ENCODE measurements at regions of chr2 and their contacts with region 1.

Region 1: GRCh38 chr2:39436592-39437510 is at the start of gene MAP4K3:
- DNase-seq: peak; percentile 86
- H3K4me3 Mint-ChIP-seq: peak within 1 kb of the TSS; percentile 87
- H3K27ac Mint-ChIP-seq: peak within 1 kb of the TSS; percentile 83
- H3K4me1 Mint-ChIP-seq: peaks cover 66% of the 10 kb centered on the region
- H3K27me3 Mint-ChIP-seq: no peaks in the 10 kb centered on the region
- total RNA-seq, gene MAP4K3: 10.6 to 12.0 TPM

Region 2: DNA sequence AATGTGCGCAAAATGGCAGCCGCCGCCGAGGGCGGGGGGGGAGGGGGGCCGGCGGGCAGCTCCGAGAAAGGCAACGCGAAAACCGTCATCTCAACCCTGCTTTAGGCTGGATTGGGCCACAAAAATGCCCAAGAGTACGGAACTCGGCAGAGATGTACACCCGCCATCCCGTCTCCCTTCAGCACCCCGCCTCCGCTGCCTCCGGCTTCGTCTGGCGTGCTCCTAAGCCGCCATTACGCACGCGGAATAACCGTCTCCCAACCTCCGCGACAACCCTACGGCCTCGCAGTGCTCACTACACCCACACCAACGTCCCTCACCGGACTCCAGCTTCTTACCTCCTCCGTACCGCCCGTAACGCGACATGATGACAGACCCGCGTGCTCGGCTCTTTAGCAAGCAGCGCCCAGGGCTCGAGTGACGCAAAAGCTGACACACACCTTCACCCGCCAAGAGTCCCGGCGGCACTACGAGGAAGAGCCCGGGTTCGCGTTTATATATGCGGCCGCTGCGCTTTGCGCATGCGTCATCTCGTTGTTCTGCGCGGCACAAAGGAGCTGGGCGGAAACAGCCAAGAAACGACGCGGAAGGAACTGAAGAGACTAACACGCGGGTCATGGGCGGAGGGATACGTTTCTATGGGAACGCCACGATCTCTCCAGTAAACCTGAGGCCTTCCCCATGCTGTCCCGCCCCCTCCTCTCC is 685.8 kb before region 1 on chr2 and contains the start of gene SRSF7:
- CTCF ChIA-PET with region 1: no interaction called
- intact Hi-C with region 1: loop called (anchors 10 kb)
- DNase-seq: peak; percentile 97
- H3K4me3 Mint-ChIP-seq: peak within 1 kb of the TSS; percentile 100
- H3K27ac Mint-ChIP-seq: peak within 1 kb of the TSS; percentile 100
- H3K4me1 Mint-ChIP-seq: peaks cover 52% of the 10 kb centered on the region
- H3K27me3 Mint-ChIP-seq: peaks cover 3% of the 10 kb centered on the region
- total RNA-seq, gene SRSF7: 212 to 217 TPM

Region 3: DNA sequence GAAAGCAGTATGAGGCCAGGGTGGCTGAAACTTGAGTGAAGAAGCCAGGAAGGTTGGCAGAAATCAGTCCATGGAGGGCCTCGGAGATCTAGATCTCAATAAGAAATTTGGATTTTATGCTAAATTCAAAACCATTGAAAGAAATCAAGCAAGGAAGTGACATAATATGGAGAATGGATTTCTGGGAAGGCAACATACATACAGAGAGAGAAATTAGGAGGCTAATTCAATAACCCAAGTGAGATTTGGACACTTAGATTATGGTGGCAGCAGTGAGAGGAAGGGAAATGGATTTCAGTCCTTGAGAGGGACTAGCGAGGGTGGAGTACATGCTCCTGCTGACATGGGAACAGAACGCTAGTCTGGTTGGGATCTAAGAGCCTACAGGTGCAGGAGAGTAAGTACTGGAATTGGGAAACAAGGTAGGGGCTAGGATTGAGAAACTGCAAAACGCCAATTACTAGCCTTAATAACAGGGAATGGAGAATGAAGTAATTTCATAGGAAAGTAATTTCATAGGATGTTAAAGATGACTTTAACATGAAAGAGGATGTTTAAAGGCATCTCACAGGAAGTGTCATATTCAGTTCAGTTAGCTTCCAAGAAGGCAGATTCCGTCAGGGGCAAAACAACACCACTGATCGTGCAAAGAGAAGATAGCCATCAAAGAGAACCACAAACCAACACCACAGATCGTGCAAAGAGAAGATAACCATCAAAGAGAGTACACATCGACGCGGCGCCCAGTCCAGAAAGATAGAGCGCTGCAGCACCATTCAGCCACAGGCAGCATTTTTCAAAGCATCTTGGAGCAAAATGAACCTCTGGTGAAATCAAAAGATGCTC is 220.3 kb before region 1 on chr2:
- CTCF ChIA-PET with region 1: no interaction called
- intact Hi-C with region 1: loop called (anchors 2 kb)
- DNase-seq: peak; percentile 64
- H3K4me3 Mint-ChIP-seq: peak overlapping the region; percentile 57
- H3K27ac Mint-ChIP-seq: peak overlapping the region; percentile 87
- H3K4me1 Mint-ChIP-seq: peaks cover 36% of the 10 kb centered on the region
- H3K27me3 Mint-ChIP-seq: no peaks in the 10 kb centered on the region

Region 4: GRCh38 chr2:39408316-39409136 is 28.3 kb before region 1 on chr2:
- CTCF ChIA-PET with region 1: no interaction called
- intact Hi-C with region 1: loop called (anchors 1 kb)
- DNase-seq: no peak
- H3K4me3 Mint-ChIP-seq: no peak overlapping the region
- H3K27ac Mint-ChIP-seq: no peak overlapping the region
- H3K4me1 Mint-ChIP-seq: peaks cover 78% of the 10 kb centered on the region
- H3K27me3 Mint-ChIP-seq: no peaks in the 10 kb centered on the region

Region 5: DNA sequence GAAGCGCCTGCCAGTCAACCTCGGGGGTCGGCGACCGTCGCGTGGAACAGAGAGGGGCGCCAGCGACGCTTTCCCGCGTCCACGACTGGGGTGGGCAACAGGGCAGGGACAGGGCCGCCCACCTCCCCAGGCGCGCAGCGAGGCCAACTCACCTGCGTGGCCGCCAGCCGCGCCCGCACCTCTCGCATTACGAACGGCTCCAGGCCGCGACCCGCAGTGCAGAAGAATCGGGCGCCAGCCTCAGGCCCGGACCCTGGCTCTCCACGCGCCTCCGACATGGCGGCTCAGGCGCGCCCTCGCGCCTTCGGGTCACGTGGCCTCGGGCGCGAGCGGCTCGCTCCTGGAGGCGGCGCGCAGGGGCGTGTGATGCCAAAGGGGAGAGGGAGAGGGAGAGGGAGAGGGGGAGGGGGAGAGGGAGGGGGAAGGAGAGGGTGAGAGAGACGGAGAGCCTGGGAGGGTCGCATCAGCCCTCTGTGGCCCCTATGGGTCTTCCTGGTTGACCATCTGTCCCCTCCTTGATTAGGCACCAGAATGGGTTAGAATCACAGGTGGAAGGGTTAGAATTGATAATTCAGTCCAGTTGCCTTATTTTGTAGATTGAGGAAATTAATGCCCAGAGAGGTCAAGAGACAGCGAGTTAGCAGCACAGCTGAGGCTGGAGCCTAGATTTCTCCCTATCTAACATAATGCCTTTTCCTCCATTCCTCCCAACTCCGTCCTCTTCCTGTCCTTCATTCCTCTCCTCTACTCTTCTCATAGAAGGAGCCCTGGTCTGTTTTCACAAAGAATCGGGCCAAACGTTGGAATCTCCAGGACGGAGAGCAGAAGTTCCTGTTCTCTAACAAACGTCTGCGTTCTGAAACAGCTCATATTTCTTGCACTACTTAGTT is 342.4 kb after region 1 on chr2 and contains the start of gene THUMPD2:
- CTCF ChIA-PET with region 1: no interaction called
- intact Hi-C with region 1: loop called (anchors 5 kb)
- DNase-seq: peak; percentile 68
- H3K4me3 Mint-ChIP-seq: peak within 1 kb of the TSS; percentile 77
- H3K27ac Mint-ChIP-seq: peak within 1 kb of the TSS; percentile 85
- H3K4me1 Mint-ChIP-seq: peaks cover 54% of the 10 kb centered on the region
- H3K27me3 Mint-ChIP-seq: no peaks in the 10 kb centered on the region
- total RNA-seq, gene THUMPD2: 13.6 to 13.8 TPM